ENCODE measurements at regions of chr7 and their contacts with region 1.

Region 1: DNA sequence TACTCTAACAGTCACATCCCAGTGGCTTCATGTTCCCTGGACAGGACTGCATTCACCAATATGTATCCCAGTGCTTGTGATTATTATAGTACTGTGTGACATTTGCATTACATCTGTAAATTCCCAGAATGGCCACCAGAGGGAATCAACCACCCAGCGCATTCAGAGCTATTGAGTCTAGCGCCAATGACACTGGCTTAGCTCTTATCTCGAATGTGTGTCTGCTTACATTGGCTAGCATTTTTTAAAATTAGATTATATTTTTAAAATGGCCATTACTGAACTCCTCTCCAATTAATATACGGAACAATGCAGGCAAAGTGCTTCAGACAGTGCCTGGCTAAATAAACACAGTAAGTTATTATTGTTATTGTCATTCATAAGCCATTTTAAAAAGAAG is 36.3 kb downstream of the TRIL start:
- DNase-seq: peak; percentile 84
- H3K4me3 ChIP-seq: no peak overlapping the region
- H3K27ac ChIP-seq: no peak overlapping the region
- H3K4me1 ChIP-seq: peaks cover 36% of the 10 kb centered on the region
- H3K27me3 ChIP-seq: no peaks in the 10 kb centered on the region
- CTCF ChIP-seq: peak; percentile 86

Region 2: DNA sequence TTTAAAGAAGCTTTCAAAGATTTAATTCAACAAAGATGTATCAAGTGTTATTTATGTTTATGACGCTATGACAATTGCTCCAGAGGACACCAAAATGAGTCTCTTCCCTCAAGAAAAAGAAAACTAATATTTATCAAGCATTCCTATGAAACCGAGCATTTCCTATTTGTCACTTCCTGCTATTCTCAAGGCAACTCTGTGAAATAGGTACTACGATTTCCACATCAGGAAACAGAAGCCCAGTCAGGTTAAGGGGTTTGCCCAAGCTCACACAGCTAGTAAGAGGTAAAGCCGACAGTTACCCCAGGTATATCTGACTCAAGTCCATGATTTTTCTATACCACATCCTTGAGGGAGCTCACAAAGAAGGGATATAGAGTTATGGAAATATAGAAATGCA is 49.6 kb before region 1 on chr7:
- CTCF ChIA-PET with region 1: no interaction called
- POLR2A ChIA-PET with region 1: no interaction called
- intact Hi-C with region 1: no loop called
- DNase-seq: no peak
- H3K4me3 ChIP-seq: no peak overlapping the region
- H3K27ac ChIP-seq: no peak overlapping the region
- H3K4me1 ChIP-seq: no peaks in the 10 kb centered on the region
- H3K27me3 ChIP-seq: peaks cover 6% of the 10 kb centered on the region
- CTCF ChIP-seq: no peak

Region 3: DNA sequence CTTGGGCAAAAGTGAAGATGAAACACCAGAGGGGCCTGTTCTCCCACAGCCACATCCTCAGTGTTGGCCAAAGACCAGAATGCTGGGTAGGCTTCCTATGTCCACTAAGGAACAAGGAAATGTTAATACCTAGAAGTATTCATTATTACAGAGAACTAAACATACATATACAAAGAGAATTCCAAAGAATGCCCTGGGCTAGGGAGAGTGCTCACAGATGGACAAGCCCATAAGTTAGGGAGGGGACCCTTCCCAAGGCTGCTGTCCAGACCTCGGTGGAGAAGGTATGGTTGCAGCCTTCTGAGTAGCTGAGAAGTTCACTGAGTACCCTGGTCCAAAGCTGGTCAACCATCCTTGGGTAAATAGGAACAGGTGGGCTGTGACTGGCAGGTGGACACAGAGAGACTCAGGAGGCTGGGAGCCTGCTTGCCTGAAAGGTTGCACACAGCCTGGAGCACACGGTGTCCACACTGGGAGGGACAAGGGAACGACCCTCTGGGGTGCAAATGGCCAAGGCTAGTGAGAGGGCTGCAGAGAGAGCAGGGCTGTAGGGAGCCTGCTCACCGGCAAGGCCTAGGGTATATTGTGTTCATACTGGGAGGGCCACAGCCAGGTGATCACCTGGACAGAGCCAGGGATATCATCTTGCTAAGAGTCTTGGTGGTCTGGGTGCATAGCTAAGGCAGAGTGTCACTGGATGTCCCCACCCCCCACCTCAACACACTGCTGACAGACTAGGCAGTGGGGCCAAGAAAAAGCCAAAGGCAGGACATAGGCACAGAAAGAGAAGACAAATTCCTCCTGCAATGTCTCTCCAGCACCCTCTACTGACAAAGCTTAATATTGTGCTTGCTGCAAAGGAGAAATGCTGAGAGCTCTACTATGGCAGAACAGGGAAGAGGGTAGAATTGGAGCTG is 184.2 kb after region 1 on chr7:
- CTCF ChIA-PET with region 1: interaction called, 51 read pairs
- POLR2A ChIA-PET with region 1: no interaction called
- intact Hi-C with region 1: loop called (anchors 1 kb)
- DNase-seq: peak; percentile 82
- H3K4me3 ChIP-seq: no peak overlapping the region
- H3K27ac ChIP-seq: no peak overlapping the region
- H3K4me1 ChIP-seq: no peaks in the 10 kb centered on the region
- H3K27me3 ChIP-seq: no peaks in the 10 kb centered on the region
- CTCF ChIP-seq: peak; percentile 87

Region 4: GRCh38 chr7:29189743-29190201 is 267.9 kb after region 1 on chr7:
- CTCF ChIA-PET with region 1: interaction called, 3 read pairs
- POLR2A ChIA-PET with region 1: no interaction called
- intact Hi-C with region 1: loop called (anchors 2 kb)
- DNase-seq: peak; percentile 89
- H3K4me3 ChIP-seq: peak overlapping the region; percentile 23
- H3K27ac ChIP-seq: peak overlapping the region; percentile 90
- H3K4me1 ChIP-seq: peaks cover 55% of the 10 kb centered on the region
- H3K27me3 ChIP-seq: no peaks in the 10 kb centered on the region
- CTCF ChIP-seq: peak; percentile 98

Region 5: GRCh38 chr7:29408841-29409243 is 487.0 kb after region 1 on chr7:
- CTCF ChIA-PET with region 1: interaction called, 19 read pairs
- POLR2A ChIA-PET with region 1: interaction called, 3 read pairs
- intact Hi-C with region 1: loop called (anchors 1 kb)
- DNase-seq: peak; percentile 95
- H3K4me3 ChIP-seq: no peak overlapping the region
- H3K27ac ChIP-seq: peak overlapping the region; percentile 60
- H3K4me1 ChIP-seq: peaks cover 35% of the 10 kb centered on the region
- H3K27me3 ChIP-seq: no peaks in the 10 kb centered on the region
- CTCF ChIP-seq: peak; percentile 84

Region 6: DNA sequence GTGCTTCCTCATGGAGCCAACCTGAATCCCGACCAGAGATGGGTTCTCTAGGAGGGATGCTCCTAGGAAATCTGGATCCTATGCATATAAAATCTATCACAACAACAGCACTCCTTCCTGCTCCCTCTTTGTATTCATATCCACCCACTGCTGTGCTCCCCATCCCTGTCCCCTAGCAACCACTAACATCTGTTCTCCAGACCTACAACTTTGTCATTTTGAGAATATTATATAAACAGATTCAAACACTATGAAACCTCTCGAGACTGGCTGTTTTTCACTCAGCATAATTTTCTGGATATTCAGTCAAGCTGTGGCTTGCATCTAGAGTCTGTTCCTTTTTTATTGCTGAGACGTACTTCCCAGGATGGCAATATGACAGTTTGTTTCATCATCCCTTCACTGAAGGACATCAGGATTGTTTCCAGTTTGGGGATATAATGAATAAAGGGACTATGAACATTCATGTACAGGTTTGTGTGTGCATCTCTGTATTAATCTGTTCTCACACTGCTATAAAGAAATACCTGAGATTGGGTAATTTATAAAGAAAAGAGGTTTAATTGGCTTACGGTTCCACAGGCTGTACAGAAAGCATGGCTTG is 605.8 kb after region 1 on chr7:
- CTCF ChIA-PET with region 1: interaction called, 17 read pairs
- POLR2A ChIA-PET with region 1: no interaction called
- intact Hi-C with region 1: no loop called
- DNase-seq: no peak
- H3K4me3 ChIP-seq: no peak overlapping the region
- H3K27ac ChIP-seq: no peak overlapping the region
- H3K4me1 ChIP-seq: no peaks in the 10 kb centered on the region
- H3K27me3 ChIP-seq: no peaks in the 10 kb centered on the region
- CTCF ChIP-seq: no peak

Region 7: GRCh38 chr7:29564496-29565223 is 642.8 kb after region 1 on chr7:
- CTCF ChIA-PET with region 1: no interaction called
- POLR2A ChIA-PET with region 1: no interaction called
- intact Hi-C with region 1: loop called (anchors 5 kb)
- DNase-seq: peak; percentile 64
- H3K4me3 ChIP-seq: peak overlapping the region; percentile 53
- H3K27ac ChIP-seq: no peak overlapping the region
- H3K4me1 ChIP-seq: peaks cover 16% of the 10 kb centered on the region
- H3K27me3 ChIP-seq: peaks cover 73% of the 10 kb centered on the region
- CTCF ChIP-seq: no peak

Region 8: DNA sequence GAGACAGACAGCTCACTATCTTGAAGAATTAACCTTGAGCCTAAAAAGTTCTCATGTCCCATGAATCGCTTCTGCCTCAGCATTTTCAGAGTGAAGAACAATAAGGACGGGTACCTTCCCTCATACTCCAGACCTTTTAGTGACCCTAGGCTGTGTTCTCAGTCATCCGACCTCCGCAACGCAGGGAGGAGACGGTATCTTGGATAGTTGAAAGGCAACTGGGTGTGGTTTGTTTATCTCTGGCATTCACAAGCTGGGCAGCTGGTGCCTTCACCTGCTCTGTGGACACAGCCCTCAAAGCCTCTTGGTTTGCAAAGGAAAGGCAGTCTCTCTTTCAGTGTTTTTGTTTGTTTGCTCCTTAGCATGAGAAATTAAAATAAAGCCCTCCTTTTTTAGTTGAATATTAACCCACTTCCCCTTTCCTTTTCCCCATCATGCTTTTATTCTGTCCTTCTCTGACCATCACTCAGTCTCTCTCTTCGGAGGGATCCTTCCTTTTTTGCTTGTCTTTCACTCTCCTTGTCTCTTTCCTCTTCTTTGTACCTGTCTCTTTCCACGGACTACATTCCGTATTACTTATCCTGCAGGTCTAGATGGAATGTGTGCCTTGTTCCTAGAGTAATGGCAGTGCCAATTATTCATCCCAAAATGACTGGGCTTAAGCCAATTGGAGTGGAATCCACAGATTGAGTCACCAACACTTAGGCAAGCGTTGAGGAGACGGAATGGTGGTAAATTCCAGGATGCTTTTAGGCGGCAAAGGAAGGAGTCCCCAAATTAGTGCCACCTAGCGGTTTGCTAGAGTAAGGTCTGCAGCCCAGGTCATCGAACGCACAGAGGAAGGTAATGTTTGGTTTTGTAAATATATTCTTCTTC is 687.6 kb after region 1 on chr7:
- CTCF ChIA-PET with region 1: interaction called, 3 read pairs
- POLR2A ChIA-PET with region 1: no interaction called
- intact Hi-C with region 1: loop called (anchors 2 kb)
- DNase-seq: peak; percentile 71
- H3K4me3 ChIP-seq: no peak overlapping the region
- H3K27ac ChIP-seq: no peak overlapping the region
- H3K4me1 ChIP-seq: no peaks in the 10 kb centered on the region
- H3K27me3 ChIP-seq: no peaks in the 10 kb centered on the region
- CTCF ChIP-seq: peak; percentile 79